Right ventricle myocardium inferior (tissue), 1 donor: ENCODE measurements at regions of chr20 and their contacts with region 1.

Region 1: DNA sequence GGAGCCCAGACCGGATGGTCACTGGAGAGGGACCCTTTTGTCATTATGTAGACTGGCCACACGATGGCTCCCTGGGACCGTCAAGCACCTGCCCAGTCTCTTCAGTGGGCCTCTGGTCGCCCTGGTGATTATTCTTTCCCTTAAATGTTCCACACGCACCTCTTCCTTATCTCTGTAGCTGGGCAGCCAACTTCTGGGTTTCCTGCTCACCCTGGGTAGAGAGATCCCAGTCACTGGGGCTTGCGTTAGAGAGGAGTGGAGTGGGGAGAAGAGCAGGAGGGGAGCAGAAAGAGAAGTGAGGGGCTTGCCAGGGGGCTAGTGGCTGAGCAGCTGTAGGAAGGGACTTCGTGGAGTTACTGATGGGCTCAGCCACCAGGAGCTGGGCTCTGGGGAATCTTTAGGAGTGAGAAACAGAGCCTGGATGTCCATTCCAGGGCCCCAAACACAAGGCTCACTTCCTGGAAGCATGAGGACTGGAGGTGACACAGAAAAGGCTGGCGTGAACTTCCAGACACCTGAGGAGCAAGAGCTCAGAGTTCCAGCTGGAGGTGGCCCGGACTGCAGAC is 150.1 kb downstream of the DHX35 start:
- DNase-seq: no peak
- ATAC-seq: peak; percentile 83

Region 2: DNA sequence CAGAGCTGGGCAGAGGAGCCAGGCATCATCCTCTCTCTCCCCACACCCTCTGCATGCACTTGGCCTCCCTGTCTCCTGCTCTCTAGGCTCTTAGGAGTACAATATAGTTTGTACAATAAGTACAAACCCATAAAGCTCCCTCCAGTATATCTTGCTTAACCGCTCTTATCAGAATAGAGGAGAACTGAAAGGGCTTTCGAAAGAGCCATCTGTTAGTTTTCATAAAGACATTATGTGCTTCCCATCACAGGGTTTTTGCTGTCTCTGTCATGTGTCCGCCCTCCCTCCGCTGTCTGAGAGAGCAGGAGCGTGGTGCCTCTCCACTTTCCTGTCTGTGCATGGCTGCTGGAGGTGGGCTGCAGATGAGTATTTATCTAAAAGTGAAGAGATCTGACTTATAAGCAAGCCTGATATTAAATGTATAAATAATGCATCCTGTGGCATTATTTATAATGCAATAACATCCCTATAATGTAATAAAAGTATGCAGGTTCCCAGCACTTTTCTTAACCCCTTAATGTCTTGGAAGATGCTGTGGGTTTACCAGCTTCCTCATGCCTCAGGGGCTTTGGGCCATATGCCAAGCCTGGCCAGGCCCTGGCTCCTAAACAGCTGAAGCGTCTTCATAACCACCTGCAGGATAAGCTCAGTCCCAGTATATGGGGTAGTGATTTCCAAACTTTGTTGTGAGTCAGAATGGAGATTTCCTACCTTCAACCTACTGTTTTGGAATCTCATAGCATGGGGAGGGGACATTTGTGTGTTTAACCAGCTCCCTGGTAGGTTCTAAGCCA is 146.9 kb after region 1 on chr20:
- intact Hi-C with region 1: loop called (anchors 10 kb)
- DNase-seq: no peak
- ATAC-seq: peak; percentile 37

Region 3: DNA sequence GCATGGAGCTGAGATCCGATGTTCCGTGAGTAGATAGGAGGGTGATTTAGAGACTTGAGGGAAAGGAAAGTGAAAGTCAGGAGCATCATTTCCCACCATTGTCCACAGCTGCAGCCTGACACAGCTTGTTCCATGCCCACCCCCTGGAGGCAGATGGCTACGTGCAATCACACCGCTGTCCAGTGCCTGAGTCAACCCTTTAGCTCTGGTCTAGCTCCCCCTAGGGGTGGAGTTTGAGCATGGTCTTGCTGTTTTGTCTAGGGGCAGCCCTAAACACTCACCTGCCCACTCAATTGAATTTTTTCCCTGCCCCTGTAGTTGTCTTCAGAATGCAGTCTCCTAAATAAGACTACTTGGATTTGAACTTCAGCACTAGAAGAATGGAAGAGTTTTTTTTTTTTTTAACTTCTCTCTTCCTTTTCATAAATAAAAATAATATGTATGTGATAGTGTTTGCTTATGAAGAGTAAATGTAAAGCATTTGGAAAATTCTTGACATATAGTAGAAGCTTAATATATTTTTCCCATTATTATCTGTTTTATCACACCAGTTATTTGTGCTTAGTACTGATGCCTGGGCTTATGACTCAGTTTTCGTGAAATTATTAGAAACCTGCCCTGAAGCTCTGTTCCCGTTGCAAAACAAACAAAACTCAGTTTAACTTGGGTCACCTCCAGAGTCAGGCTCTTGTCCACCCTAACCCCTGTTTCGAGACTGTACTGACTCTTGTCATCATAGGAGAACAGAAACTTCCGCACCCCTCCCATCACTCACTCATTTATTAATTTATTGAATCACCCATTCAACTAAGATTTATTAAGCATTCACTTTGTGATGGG is 762.0 kb after region 1 on chr20:
- intact Hi-C with region 1: loop called (anchors 5 kb)
- DNase-seq: peak; percentile 79
- ATAC-seq: peak; percentile 93